Activated naive CD4-positive, alpha-beta T cell treated with anti-CD3 and anti-CD28 coated beads for 36 hours (primary cell): ENCODE measurements at regions of chr1 and their contacts with region 1.

Region 1: DNA sequence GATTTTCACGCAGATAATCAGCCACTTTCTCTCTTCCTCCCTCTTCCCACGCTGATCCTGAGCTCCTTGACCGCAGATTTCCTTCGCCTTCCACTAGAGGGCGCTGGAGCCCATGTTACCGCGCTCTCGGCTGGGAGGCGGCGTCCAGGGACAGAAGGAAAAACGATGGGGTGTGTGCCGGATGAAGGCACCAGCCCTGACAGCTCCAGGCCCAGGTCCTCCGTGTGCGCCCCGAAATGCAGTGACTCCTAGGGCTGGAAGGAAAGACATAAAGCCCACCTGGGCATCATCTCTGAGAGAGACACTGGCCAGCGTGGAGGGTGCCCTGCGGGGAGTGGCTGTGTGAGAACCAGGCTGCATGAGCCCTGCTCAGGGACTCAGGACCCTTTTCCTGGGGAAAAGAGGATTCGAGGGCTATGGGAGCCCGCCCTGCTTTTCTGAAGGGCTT is 44.9 kb upstream of the CYP2J2 start:
- DNase-seq: peak; percentile 60
- H3K4me3 Mint-ChIP-seq: no peak overlapping the region
- H3K27ac Mint-ChIP-seq: no peak overlapping the region
- H3K4me1 Mint-ChIP-seq: peaks cover 3% of the 10 kb centered on the region
- H3K27me3 Mint-ChIP-seq: peaks cover 22% of the 10 kb centered on the region

Region 2: DNA sequence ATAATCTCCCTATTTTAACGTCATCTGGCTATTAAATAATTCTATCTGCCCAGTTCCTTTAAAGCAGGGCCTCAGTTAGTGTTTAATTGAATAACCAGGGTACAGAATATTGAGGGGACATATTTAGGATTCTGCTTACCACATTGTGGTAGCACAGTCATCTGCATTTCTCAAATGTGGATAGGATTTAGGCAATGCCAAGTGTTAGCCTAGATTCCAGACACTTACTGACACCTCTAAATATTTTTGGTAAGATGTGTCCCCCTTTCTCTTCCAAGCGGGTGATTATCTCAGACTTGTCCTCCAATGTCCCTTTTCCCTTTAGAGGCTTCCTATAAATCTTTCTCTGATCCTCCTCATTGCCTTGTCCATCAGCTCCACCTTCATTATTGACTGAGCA is 317.5 kb before region 1 on chr1:
- CTCF ChIA-PET with region 1: no interaction called
- intact Hi-C with region 1: no loop called
- DNase-seq: no peak
- H3K4me3 Mint-ChIP-seq: no peak overlapping the region
- H3K27ac Mint-ChIP-seq: no peak overlapping the region
- H3K4me1 Mint-ChIP-seq: no peaks in the 10 kb centered on the region
- H3K27me3 Mint-ChIP-seq: no peaks in the 10 kb centered on the region

Region 3: GRCh38 chr1:60073605-60074278 is 102.3 kb after region 1 on chr1 and contains the start of gene C1orf87:
- CTCF ChIA-PET with region 1: no interaction called
- intact Hi-C with region 1: no loop called
- DNase-seq: no peak
- H3K4me3 Mint-ChIP-seq: no peak within 1 kb of the TSS
- H3K27ac Mint-ChIP-seq: no peak within 1 kb of the TSS
- H3K4me1 Mint-ChIP-seq: no peaks in the 10 kb centered on the region
- H3K27me3 Mint-ChIP-seq: peaks cover 43% of the 10 kb centered on the region
- total RNA-seq, gene C1orf87: not detected

Region 4: GRCh38 chr1:60149251-60149650 is 177.8 kb after region 1 on chr1:
- CTCF ChIA-PET with region 1: no interaction called
- intact Hi-C with region 1: loop called (anchors 10 kb)
- DNase-seq: no peak
- H3K4me3 Mint-ChIP-seq: no peak overlapping the region
- H3K27ac Mint-ChIP-seq: no peak overlapping the region
- H3K4me1 Mint-ChIP-seq: no peaks in the 10 kb centered on the region
- H3K27me3 Mint-ChIP-seq: peaks cover 10% of the 10 kb centered on the region

Region 5: DNA sequence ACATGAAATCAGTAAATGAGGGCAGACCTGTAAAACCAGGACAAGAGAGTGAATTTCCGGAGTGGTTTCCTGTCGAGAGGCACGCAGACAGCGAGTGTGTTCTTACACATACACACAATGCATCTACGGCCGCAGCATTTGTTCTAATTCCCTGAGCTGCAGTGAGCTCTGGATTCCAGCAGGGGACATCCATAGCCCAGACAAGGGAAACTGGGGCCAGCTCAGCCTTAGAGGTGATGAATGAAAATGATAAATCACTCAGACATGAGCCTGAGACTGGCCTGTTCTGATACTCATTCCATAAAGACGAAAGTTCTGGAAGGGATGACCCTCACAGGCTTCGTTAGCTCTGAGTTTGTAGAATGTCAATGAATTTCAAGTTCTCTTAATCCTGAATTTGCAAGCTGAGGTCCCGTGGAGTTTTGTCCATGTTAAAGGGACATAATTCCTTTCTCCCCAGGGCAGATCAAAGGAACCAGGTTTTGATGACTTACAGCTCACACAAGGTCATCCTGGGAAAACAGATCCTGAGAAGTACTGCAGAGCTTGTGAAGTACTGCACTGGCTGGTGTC is 310.0 kb after region 1 on chr1:
- CTCF ChIA-PET with region 1: no interaction called
- intact Hi-C with region 1: loop called (anchors 10 kb)
- DNase-seq: peak; percentile 39
- H3K4me3 Mint-ChIP-seq: no peak overlapping the region
- H3K27ac Mint-ChIP-seq: no peak overlapping the region
- H3K4me1 Mint-ChIP-seq: peaks cover 5% of the 10 kb centered on the region
- H3K27me3 Mint-ChIP-seq: peaks cover 2% of the 10 kb centered on the region

Region 6: DNA sequence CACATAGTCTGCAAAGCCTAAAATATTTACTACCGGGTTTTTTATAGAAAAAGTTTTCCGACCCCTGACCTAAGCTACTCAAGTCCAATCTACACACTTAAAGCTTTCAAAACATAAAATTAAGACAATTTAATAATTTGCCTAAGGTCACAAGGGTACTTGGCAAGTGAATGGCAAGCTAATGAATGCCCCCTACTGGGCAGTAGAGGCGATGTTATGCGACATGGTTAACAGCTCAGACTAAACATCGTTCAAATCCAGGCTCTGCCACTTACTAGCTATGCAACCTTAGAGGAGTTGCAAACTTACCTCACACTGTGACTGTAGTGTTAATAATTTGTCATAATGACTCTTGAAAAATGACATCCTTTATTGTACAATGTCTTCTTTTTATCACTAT is 793.7 kb after region 1 on chr1:
- CTCF ChIA-PET with region 1: interaction called, 4 read pairs
- intact Hi-C with region 1: loop called (anchors 5 kb)
- DNase-seq: peak; percentile 12
- H3K4me3 Mint-ChIP-seq: no peak overlapping the region
- H3K27ac Mint-ChIP-seq: no peak overlapping the region
- H3K4me1 Mint-ChIP-seq: no peaks in the 10 kb centered on the region
- H3K27me3 Mint-ChIP-seq: peaks cover 2% of the 10 kb centered on the region

Region 7: GRCh38 chr1:61588736-61589672 is 1617.5 kb after region 1 on chr1:
- CTCF ChIA-PET with region 1: interaction called, 3 read pairs
- intact Hi-C with region 1: loop called (anchors 10 kb)
- DNase-seq: peak; percentile 79
- H3K4me3 Mint-ChIP-seq: no peak overlapping the region
- H3K27ac Mint-ChIP-seq: no peak overlapping the region
- H3K4me1 Mint-ChIP-seq: no peaks in the 10 kb centered on the region
- H3K27me3 Mint-ChIP-seq: peaks cover 4% of the 10 kb centered on the region